Activated CD4-positive, alpha-beta T cell treated with anti-CD3 and anti-CD28 coated beads for 36 hours (primary cell): ENCODE measurements at regions of chr13 and their contacts with region 1.

Region 1: GRCh38 chr13:48233046-48233907 is at the start of gene ITM2B:
- DNase-seq: peak; percentile 78
- ATAC-seq: peak; percentile 71
- H3K4me3 Mint-ChIP-seq: peak within 1 kb of the TSS; percentile 84
- H3K27ac Mint-ChIP-seq: peak within 1 kb of the TSS; percentile 89
- H3K4me1 Mint-ChIP-seq: peaks cover 56% of the 10 kb centered on the region
- H3K27me3 Mint-ChIP-seq: peaks cover 2% of the 10 kb centered on the region
- total RNA-seq, gene ITM2B: 67.0 to 96.5 TPM

Region 2: DNA sequence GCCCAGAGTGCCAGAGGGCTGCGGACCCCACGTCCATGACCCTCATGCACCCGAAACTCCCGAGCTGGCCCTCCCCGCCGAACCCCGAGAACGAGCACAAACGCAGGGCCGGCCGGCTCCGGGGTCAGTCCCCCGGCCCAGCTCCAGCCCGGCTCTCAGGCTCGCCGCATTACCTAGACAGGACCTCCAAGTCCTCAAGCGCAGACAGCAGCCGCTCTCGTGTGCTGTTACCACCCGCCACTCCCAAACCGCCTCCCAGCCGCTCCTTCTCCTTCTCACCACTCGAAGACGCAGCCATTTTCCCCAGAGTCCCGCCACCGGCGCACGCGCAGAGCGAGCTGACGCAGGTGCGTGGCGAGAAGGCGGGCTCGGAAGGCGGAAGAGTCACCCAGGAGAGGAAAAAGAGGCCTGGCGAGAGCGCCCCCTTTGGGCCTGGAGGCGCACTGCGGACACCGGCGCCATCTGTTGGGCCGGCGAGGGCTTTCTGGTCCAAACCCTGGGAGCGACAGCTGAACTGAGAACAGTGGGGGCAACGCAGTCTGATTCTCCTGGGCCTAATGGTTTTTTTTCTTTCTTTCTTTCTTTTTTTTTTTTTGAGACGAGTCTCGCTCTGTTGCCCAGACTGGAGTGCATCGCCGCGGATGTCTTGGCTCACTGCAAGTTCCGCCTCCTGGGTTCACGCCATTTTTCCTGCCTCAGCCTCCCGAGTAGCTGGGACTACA is 138.3 kb before region 1 on chr13 and contains the start of gene MED4:
- CTCF ChIA-PET with region 1: interaction called, 7 read pairs
- POLR2A ChIA-PET with region 1: interaction called, 3 read pairs
- intact Hi-C with region 1: loop called in 1 of 2 experiments (anchors 1 kb)
- DNase-seq: peak; percentile 98
- ATAC-seq: peak; percentile 97
- H3K4me3 Mint-ChIP-seq: peak within 1 kb of the TSS; percentile 97
- H3K27ac Mint-ChIP-seq: peak within 1 kb of the TSS; percentile 92
- H3K4me1 Mint-ChIP-seq: peaks cover 29% of the 10 kb centered on the region
- H3K27me3 Mint-ChIP-seq: no peaks in the 10 kb centered on the region
- total RNA-seq, gene MED4: 53.5 to 62.7 TPM

Region 3: DNA sequence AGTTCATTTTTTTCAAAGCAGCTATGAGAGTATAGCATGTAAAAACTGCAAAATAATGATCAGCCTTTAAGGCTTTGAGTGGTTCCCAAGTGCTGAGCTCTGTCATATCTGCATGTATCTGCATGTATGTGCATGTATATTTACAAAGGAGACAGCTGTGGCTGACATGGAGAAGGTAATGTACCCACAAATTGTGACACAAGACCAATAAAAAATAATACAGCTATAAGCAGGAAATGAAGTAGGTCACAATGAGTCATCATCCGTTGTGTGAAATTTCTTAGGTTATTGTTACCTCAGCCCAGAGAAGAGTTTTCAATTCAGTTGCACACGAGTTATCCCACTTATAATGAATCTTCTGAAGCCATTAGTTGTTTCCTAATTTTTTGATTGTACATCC is 77.4 kb before region 1 on chr13:
- CTCF ChIA-PET with region 1: interaction called, 4 read pairs
- POLR2A ChIA-PET with region 1: interaction called, 6 read pairs
- intact Hi-C with region 1: loop called (anchors 1 to 5 kb)
- DNase-seq: peak; percentile 26
- ATAC-seq: peak; percentile 78
- H3K4me3 Mint-ChIP-seq: peak overlapping the region; percentile 54
- H3K27ac Mint-ChIP-seq: peak overlapping the region; percentile 96
- H3K4me1 Mint-ChIP-seq: peaks cover 87% of the 10 kb centered on the region
- H3K27me3 Mint-ChIP-seq: no peaks in the 10 kb centered on the region

Region 4: DNA sequence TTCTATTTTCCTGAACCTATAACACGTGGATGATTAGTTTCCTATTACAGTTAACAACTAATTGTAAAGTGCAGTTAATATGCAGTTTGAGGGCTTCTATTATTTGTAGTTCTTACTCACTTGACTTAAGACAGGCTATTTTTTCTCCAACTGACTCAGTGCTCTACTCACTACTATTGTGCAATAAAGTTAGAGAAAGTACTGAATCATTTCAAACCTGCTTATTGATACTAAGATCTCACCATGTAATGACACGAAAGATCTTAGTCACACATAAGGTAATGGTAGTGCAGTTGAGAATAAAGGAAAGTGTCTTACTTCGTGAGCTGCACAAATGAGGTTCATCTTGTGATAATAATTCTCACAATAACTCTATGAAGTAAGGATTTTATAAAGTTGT is 23.1 kb before region 1 on chr13:
- CTCF ChIA-PET with region 1: no interaction called
- POLR2A ChIA-PET with region 1: interaction called, 5 read pairs
- intact Hi-C with region 1: loop called in 1 of 2 experiments (anchors 1 kb)
- DNase-seq: no peak
- ATAC-seq: peak; percentile 96
- H3K4me3 Mint-ChIP-seq: no peak overlapping the region
- H3K27ac Mint-ChIP-seq: no peak overlapping the region
- H3K4me1 Mint-ChIP-seq: peaks cover 24% of the 10 kb centered on the region
- H3K27me3 Mint-ChIP-seq: peaks cover 13% of the 10 kb centered on the region

Region 5: GRCh38 chr13:48249018-48249417 is 15.7 kb after region 1 on chr13:
- CTCF ChIA-PET with region 1: interaction called, 7 read pairs
- POLR2A ChIA-PET with region 1: interaction called, 5 read pairs
- intact Hi-C with region 1: loop called (anchors 1 kb)
- DNase-seq: no peak
- ATAC-seq: peak; percentile 97
- H3K4me3 Mint-ChIP-seq: peak overlapping the region; percentile 37
- H3K27ac Mint-ChIP-seq: peak overlapping the region; percentile 85
- H3K4me1 Mint-ChIP-seq: peaks cover 62% of the 10 kb centered on the region
- H3K27me3 Mint-ChIP-seq: no peaks in the 10 kb centered on the region

Region 6: DNA sequence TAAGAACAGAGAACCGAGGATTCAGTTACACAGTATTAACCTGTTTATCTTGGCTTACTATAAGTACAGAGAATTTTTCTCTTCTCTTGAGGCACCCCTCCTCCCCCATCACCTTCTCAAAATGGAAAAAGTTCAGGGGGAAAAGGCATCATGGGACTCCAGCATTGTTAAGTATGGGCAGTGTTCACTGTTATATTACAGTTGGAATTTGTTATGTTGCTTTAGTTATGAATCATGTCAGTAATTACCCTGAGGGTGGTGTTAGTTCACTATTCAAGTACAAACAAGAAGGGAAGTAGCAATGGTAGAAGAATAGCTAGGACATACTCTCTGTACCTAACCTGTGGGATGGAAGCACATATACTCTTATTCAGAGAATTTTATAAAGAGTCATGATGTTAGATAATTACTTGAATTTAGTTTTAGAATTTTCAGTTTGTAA is 167.6 kb after region 1 on chr13:
- CTCF ChIA-PET with region 1: no interaction called
- POLR2A ChIA-PET with region 1: no interaction called
- intact Hi-C with region 1: loop called in 1 of 2 experiments (anchors 5 kb)
- DNase-seq: no peak
- ATAC-seq: peak; percentile 21
- H3K4me3 Mint-ChIP-seq: no peak overlapping the region
- H3K27ac Mint-ChIP-seq: peak overlapping the region; percentile 1
- H3K4me1 Mint-ChIP-seq: peaks cover 53% of the 10 kb centered on the region
- H3K27me3 Mint-ChIP-seq: no peaks in the 10 kb centered on the region

Region 7: GRCh38 chr13:48859272-48860105 is 626.2 kb after region 1 on chr13:
- CTCF ChIA-PET with region 1: no interaction called
- POLR2A ChIA-PET with region 1: no interaction called
- intact Hi-C with region 1: no loop called
- DNase-seq: no peak
- ATAC-seq: no peak
- H3K4me3 Mint-ChIP-seq: no peak overlapping the region
- H3K27ac Mint-ChIP-seq: no peak overlapping the region
- H3K4me1 Mint-ChIP-seq: peaks cover 20% of the 10 kb centered on the region
- H3K27me3 Mint-ChIP-seq: peaks cover 5% of the 10 kb centered on the region